ENCODE measurements at regions of chr7 and their contacts with region 1.

Region 1: GRCh38 chr7:91979590-91979989 is 38.9 kb downstream of the AKAP9 start:
- DNase-seq: no peak
- ATAC-seq: no peak
- H3K4me3 ChIP-seq: no peak overlapping the region
- H3K27ac ChIP-seq: no peak overlapping the region
- H3K4me1 ChIP-seq: no peaks in the 10 kb centered on the region
- H3K27me3 ChIP-seq: no peaks in the 10 kb centered on the region
- CTCF ChIP-seq: no peak

Region 2: DNA sequence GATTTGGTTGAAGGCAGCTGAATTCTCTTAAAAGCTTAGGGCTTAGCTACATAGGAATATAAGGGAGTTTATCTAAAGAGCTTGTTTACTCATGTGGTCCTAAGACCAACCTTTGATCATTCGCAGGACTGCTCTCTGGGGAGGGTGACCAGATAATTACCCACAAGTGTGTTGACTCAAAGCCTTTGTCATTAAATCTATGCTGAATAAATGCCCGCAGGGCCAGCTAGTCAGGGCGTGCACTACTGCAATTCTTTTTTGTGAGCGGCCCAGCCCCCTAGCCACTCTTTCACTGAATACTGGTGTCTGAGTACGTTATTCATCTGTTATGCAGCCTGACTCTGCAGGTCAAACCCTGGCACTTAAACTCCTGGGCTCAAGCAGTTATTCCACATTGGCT is 30.6 kb after region 1 on chr7:
- CTCF ChIA-PET with region 1: no interaction called
- POLR2A ChIA-PET with region 1: interaction called, 14 read pairs
- in situ Hi-C with region 1: no loop called
- intact Hi-C with region 1: no loop called
- DNase-seq: no peak
- ATAC-seq: no peak
- H3K4me3 ChIP-seq: no peak overlapping the region
- H3K27ac ChIP-seq: no peak overlapping the region
- H3K4me1 ChIP-seq: no peaks in the 10 kb centered on the region
- H3K27me3 ChIP-seq: no peaks in the 10 kb centered on the region
- CTCF ChIP-seq: no peak

Region 3: GRCh38 chr7:92137557-92137956 is 158.0 kb after region 1 on chr7:
- CTCF ChIA-PET with region 1: no interaction called
- POLR2A ChIA-PET with region 1: no interaction called
- in situ Hi-C with region 1: no loop called
- intact Hi-C with region 1: no loop called
- DNase-seq: no peak
- ATAC-seq: no peak
- H3K4me3 ChIP-seq: no peak overlapping the region
- H3K27ac ChIP-seq: peak overlapping the region; percentile 52; the same call in 1 of the 2 replicates
- H3K4me1 ChIP-seq: peaks cover 11% of the 10 kb centered on the region
- H3K27me3 ChIP-seq: no peaks in the 10 kb centered on the region
- CTCF ChIP-seq: no peak